SK-N-SH (cell line): ENCODE measurements at regions of chr10 and their contacts with region 1.

Region 1: DNA sequence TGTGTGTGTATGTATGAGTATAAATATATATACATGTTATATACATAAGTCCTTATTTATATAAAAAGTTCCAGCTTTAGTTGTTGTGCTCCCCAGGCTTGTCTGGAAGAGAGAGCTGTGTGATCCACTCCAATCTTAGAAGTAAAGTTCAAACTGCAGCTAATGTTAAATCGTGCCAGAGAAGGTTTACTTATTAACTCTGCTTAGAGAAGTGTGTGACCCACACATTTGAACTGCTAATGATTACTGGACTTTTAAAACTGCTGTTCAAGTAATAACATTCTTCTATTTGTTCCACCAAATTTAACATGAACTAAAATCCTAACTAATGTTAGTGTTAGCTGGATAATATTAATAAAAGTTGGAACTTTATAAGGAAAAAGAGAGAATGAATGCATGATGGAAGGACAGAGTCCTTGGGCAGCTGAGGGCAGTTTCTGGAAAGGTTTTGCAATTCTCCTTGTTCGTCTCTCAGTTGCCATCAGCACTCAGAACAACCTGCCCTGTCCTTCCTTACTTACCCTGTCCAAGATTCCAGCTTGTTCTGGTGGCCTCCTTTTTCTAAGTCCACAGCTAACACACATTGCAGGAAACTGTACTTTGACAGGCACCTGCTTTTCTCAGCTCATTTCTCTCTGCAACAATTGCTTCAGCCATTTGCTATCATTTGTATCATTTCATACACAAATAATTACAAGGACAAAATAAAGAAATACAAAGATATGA is 162.6 kb downstream of the FAM107B start:
- DNase-seq: no peak
- H3K4me3 ChIP-seq: no peak overlapping the region
- H3K27ac ChIP-seq: no peak overlapping the region
- H3K4me1 ChIP-seq: no peaks in the 10 kb centered on the region; a peak in 1 of 4 replicates
- H3K27me3 ChIP-seq: 0 out of 2 replicates have a peak, but pooled peaks cover 16% of the 10 kb centered on the region
- CTCF ChIP-seq: no peak
- EP300 ChIP-seq: no peak
- RAD21 ChIP-seq: no peak

Region 2: DNA sequence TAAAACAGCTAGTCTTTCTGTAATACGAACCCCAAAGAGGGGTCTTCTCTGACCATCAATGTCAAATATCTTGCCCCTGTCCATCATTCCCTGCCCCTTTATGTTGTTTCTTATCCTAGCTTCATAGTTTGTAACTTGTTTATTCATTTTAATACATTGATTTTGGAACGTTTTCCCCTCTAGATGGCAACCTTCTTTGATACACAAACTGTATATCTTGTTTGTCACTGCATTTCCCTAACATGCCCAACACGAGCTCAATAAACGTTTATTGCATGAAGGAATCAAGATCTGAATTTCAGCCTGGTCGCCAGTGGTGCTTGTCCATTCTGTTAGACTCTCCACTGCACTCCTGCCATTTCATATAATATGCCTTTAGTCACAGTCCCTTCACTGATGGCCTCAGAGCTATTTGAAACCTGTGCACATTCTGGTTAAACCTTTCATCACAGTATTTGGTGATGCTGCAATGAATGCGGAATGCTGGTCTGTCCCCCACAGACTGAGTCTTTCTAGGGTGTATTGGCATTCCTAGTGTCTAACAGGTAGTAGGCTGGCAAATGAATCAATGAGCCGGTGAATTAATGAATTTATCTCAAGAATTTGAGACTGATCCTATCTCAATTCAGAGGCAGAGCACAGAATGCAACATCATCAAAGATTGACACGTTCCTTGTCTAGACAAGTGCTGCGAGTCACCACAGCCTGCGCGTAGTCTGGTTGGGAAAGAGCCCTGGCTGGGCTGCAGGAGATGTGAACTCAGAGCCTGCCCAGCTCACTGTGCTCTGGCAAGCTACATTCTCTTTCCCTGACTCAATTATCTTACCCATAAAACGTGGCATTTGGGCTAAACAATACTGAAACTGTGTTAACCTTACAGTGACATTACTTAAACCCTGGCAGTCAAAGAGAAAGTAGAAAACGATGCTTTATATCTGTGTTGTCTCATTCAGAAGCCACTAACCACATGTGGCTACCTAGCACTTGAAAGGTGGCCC is 226.2 kb before region 1 on chr10:
- CTCF ChIA-PET with region 1: no interaction called
- POLR2A ChIA-PET with region 1: no interaction called
- DNase-seq: no peak
- H3K4me3 ChIP-seq: no peak overlapping the region; a peak in 1 of 4 replicates
- H3K27ac ChIP-seq: peak overlapping the region in 1 of 2 experiments; percentile 42; a peak in 2 of 4 replicates
- H3K4me1 ChIP-seq: no peaks in the 10 kb centered on the region
- H3K27me3 ChIP-seq: no peaks in the 10 kb centered on the region
- CTCF ChIP-seq: peak; percentile 36; the same call in 1 of the 2 replicates
- EP300 ChIP-seq: no peak
- RAD21 ChIP-seq: peak; percentile 38

Region 3: DNA sequence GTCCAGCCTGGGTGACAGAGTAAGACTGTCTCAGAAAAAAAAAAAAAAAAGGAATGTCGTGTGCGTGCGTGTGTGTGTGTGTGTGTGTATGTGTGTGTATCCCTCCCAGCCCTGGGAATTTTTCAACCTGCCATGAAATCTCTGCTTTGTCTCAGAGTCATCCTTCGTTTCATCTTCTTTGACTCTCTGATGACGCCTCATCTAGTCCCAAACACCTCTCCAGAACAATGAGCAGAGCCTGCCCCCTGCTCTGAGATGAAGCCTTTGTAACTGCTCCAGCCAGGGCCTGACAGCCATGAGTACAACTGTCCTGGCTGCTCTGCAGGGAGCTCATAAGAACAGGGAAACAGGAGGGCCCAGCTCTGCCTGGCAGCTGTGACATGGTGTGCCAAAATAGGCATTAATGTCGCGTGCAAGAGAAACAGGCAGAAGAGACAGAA is 13.1 kb after region 1 on chr10:
- CTCF ChIA-PET with region 1: interaction called, 11 read pairs
- POLR2A ChIA-PET with region 1: interaction called, 3 read pairs
- DNase-seq: peak; percentile 39
- H3K4me3 ChIP-seq: no peak overlapping the region
- H3K27ac ChIP-seq: peak overlapping the region in 1 of 2 experiments; percentile 36; a peak in 2 of 4 replicates
- H3K4me1 ChIP-seq: peaks cover 0 to 8% of the 10 kb centered on the region in 2 experiments; a peak in 1 of 4 replicates
- H3K27me3 ChIP-seq: no peaks in the 10 kb centered on the region
- CTCF ChIP-seq: no peak
- EP300 ChIP-seq: no peak
- RAD21 ChIP-seq: peak; percentile 13; the same call in 1 of the 2 replicates